ENCODE measurements at regions of chr15 and their contacts with region 1.

Region 1: DNA sequence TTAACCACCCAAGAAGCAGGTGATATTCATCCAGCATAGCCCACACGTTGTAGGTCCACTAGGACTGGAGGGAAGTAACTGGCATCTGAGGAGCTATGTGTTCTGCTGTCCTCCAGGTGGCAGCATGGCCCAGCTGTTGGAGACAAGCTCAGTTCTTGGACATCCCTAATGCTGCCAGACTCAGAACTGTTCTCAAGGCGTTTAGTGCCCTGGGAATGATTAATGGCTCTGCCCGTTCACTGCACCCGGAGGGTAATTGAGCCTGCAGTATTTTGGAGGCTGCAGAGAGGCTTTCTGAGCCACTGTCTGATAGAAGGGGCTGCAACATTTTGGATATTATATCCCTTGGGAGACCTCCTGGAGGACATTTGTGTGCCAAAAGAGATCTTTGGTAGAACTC is 521.2 kb upstream of the SEMA6D start:
- DNase-seq: peak; percentile 11
- H3K4me3 ChIP-seq: no peak overlapping the region
- H3K27me3 ChIP-seq: no peaks in the 10 kb centered on the region
- CTCF ChIP-seq: peak; percentile 84

Region 2: GRCh38 chr15:47184003-47184907 is 11.8 kb before region 1 on chr15:
- CTCF ChIA-PET with region 1: interaction called, 20 read pairs
- POLR2A ChIA-PET with region 1: no interaction called
- DNase-seq: no peak
- H3K4me3 ChIP-seq: peak overlapping the region; percentile 28
- H3K27me3 ChIP-seq: peaks cover 13% of the 10 kb centered on the region
- CTCF ChIP-seq: no peak

Region 3: GRCh38 chr15:47339803-47340572 is 143.9 kb after region 1 on chr15:
- CTCF ChIA-PET with region 1: no interaction called
- POLR2A ChIA-PET with region 1: no interaction called
- DNase-seq: no peak
- H3K4me3 ChIP-seq: no peak overlapping the region
- H3K27me3 ChIP-seq: no peaks in the 10 kb centered on the region; the same call in 1 of the 2 replicates
- CTCF ChIP-seq: no peak

Measured in BJ (cell line).